ENCODE measurements at regions of chr17 and their contacts with region 1.

Region 1: DNA sequence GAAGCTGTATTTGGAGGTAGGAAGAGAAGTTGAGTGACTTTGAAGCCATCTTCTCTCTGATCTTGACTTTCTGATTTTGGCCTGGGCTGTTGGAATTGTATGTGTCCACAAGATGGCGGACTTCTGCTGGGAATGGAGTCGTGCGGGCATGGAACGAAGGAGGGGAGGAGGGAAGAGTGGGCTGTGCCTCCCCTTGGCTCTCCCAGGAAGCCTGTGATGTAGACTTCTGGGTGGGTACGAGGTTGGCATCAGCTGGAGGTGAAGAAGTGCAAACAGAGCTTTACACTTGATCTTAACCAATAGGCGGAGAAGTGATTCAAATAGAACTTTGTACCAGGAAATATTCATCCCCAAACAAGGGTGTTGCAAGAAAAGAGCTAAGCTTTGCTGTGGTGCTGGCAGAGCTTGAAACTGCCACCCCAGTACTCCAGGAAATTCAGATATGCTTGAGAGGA is 7.4 kb upstream of the TMEM220 start:
- DNase-seq: peak; percentile 65
- H3K4me3 Mint-ChIP-seq: no peak overlapping the region
- H3K27ac Mint-ChIP-seq: no peak overlapping the region
- H3K4me1 Mint-ChIP-seq: peaks cover 5% of the 10 kb centered on the region
- H3K27me3 Mint-ChIP-seq: peaks cover 72% of the 10 kb centered on the region
- CTCF ChIP-seq: peak; percentile 81

Region 2: GRCh38 chr17:10748531-10749163 is 11.5 kb after region 1 on chr17:
- CTCF ChIA-PET with region 1: interaction called, 29 read pairs
- POLR2A ChIA-PET with region 1: interaction called, 4 read pairs
- intact Hi-C with region 1: no loop called
- DNase-seq: no peak
- H3K4me3 Mint-ChIP-seq: no peak overlapping the region
- H3K27ac Mint-ChIP-seq: no peak overlapping the region
- H3K4me1 Mint-ChIP-seq: peaks cover 5% of the 10 kb centered on the region
- H3K27me3 Mint-ChIP-seq: peaks cover 29% of the 10 kb centered on the region
- CTCF ChIP-seq: no peak

Region 3: DNA sequence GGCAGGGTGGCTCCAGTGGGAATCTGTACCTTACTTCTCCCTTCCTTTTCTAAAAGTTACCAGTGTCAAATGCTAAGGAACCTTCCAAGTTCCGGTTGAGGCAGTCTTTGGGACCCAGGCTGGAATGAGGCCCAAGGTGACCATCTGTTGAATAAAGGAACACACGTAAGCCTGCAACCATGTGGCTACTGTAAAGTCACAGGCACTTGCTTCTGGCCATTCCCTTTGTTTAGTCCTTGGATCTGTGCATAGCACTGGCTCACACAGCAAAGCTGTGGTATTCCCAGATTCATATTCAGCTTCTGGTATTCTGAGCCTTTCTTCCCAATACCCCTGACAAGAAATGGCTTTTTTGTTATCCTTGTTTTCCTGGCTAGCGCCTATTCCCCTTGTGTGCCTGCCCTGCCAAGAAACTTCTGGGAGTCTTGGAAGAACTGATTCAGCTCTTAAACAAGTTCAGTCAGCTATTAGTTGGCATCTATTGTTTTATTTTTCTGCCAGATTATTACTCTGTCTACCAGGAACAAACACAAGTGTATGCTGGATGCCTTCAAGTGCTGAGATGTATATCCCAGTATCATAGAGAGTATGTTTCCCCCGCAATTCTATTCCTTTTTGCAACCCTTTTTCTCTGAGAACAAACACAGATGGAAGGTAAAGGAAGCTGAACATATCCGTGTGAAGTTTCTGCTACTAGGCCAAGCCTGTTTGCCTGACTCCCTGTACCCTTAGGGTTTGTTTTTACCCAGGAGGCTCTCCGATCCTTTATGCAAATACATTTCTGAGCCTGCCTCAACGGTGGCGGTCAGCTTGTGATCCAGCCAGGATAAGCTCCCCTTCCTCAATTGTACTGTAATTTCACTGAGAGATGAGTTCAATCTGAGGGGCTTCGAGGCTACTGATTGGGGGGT is 53.6 kb after region 1 on chr17:
- CTCF ChIA-PET with region 1: interaction called, 15 read pairs
- POLR2A ChIA-PET with region 1: no interaction called
- intact Hi-C with region 1: no loop called
- DNase-seq: no peak
- H3K4me3 Mint-ChIP-seq: no peak overlapping the region
- H3K27ac Mint-ChIP-seq: no peak overlapping the region
- H3K4me1 Mint-ChIP-seq: peaks cover 5% of the 10 kb centered on the region
- H3K27me3 Mint-ChIP-seq: no peaks in the 10 kb centered on the region
- CTCF ChIP-seq: no peak

Region 4: DNA sequence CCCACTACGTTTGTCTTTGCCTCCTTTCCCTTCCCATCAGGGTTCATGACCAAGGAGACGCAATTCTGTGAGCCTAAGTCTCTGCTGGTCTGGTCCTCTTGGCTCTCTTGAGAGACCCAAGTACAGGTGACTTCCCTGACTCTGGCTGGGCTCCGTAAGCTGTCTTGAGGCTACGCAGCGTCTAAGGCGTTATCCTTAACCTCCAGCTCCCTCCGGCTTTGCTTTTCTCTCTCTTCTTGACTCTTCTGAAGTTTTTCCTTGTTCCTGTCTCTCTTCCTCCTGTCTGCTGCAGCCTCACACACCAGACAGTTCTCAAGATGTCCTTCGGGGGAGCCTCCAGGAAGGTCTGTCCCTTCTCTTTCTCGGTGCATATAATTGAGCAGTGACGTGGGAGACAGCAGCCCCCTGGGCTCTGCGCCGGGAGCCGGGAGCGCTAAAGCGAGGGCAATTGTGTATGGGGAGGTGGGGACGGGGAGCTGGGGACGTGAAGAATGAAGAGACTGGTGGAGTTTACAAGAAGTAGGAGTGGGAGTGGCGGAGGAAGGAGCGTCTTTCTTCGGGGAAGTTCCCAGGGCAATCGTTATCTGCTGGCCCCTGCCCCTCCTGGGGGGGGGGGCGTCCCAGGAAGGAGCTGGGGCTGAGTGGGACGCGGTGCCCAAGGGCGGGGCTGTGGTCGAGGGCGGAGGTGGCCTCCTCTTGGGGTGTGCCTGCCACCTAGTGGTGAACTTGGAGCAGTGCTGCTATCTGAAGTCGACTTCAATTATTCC is 107.6 kb after region 1 on chr17:
- CTCF ChIA-PET with region 1: interaction called, 90 read pairs
- POLR2A ChIA-PET with region 1: no interaction called
- intact Hi-C with region 1: loop called (anchors 1 kb)
- DNase-seq: peak; percentile 45
- H3K4me3 Mint-ChIP-seq: peak overlapping the region; percentile 52
- H3K27ac Mint-ChIP-seq: no peak overlapping the region
- H3K4me1 Mint-ChIP-seq: peaks cover 11% of the 10 kb centered on the region
- H3K27me3 Mint-ChIP-seq: peaks cover 11% of the 10 kb centered on the region
- CTCF ChIP-seq: peak; percentile 90

Region 5: DNA sequence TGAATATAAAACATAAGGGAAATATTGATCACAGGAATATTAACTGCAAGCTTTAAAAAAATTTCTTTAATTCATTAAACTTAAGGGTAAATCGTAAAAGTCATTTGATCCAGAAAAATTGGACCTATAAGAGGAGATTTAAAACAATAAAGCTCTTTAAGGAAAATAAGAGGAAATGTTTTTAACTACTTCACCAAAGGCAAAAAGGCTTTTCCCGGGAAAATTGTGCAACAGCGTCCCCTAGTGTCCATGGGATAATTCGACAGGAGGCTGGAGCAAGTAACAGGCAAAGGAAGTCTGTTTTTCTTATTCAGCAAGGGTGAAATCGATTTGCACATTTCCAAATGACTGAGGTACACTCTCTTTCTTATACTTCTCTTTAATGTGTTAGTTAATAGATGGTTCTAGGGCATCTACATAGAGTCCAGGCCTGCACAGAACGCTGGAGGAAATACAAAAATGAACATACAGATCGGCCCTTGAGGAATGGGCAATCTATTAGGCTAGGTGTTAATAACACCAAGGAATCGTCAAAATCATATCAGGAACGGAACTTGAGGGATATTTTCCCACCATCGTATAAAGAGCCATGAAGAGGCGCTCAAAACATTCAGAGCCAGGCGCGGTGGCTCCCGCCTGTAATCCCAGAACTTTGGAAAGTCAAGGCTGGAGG is 1198.7 kb after region 1 on chr17:
- CTCF ChIA-PET with region 1: interaction called, 21 read pairs
- POLR2A ChIA-PET with region 1: no interaction called
- intact Hi-C with region 1: loop called (anchors 2 kb)
- DNase-seq: peak; percentile 79
- H3K4me3 Mint-ChIP-seq: no peak overlapping the region
- H3K27ac Mint-ChIP-seq: no peak overlapping the region
- H3K4me1 Mint-ChIP-seq: peaks cover 5% of the 10 kb centered on the region
- H3K27me3 Mint-ChIP-seq: no peaks in the 10 kb centered on the region
- CTCF ChIP-seq: peak; percentile 94